Activated CD8-positive, alpha-beta memory T cell treated with anti-CD3 and anti-CD28 coated beads, Interleukin-2, amount 10 ng/mL, durations not matched to agents 7 days and 5 days (primary cell): ENCODE measurements at regions of chr10 and their contacts with region 1.

Region 1: DNA sequence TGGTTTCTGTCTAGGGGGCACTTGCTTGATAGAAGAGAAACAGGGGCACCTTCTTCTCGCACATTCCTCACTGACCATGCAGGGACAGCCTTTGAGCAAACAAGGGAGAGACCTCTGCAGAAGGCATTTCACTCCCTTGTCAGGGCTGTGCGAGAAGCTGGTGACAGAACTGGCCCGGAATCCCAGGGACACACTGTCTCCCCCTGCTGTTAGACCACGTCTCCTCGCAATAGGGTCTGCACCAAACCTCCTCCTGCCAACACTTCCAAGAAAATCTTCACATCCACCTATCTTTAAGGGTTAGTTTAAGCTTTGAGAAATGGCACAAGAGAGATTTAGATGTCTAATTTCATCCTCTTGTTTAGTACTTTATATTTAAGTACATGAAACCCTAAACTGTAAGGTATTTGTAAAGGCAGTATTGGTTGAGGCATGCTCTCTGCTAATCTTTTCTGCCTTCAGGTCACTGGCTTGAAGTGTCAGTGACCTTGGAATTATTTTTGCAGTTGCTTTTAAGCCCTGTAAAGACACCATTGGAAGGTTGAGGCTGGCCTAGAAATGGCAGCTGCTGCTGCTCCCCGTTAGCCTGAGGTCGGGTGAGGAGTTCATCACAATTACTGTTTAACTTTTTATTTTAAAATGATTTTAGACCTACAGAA is 37.0 kb downstream of the RBM20 start:
- DNase-seq: peak; percentile 54
- ATAC-seq: peak; percentile 69
- H3K4me3 Mint-ChIP-seq: no peak overlapping the region
- H3K27ac Mint-ChIP-seq: no peak overlapping the region
- H3K4me1 Mint-ChIP-seq: peaks cover 2% of the 10 kb centered on the region
- H3K27me3 Mint-ChIP-seq: peaks cover 45% of the 10 kb centered on the region

Region 2: DNA sequence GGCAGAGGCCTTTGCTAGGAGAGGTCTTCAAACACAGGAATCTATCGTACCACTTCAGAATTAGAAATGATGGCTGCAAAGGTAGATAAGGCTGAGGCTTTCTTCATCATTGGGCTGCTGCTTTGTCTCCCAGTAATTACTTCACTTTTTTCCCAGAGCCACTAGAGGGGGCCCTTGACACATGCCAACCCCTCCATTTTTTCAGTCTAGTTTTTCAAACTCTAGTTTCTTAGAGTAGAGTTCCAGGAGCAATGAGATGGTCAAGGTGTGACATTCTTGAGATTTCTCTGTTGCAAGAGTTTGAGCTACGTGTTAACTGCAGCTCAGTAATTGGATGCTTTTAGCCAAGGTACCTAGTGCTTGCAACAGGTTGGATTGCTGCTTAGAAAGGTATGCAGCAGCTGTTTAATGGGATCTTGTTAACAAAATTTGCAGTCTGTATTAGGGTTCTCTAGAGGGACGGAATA is 70.8 kb before region 1 on chr10:
- CTCF ChIA-PET with region 1: interaction called, 13 read pairs
- DNase-seq: peak; percentile 66
- ATAC-seq: peak; percentile 54
- H3K4me3 Mint-ChIP-seq: no peak overlapping the region
- H3K27ac Mint-ChIP-seq: no peak overlapping the region
- H3K4me1 Mint-ChIP-seq: peaks cover 43% of the 10 kb centered on the region
- H3K27me3 Mint-ChIP-seq: no peaks in the 10 kb centered on the region

Region 3: GRCh38 chr10:110811791-110812574 is 130.8 kb after region 1 on chr10:
- CTCF ChIA-PET with region 1: no interaction called
- DNase-seq: no peak
- ATAC-seq: no peak
- H3K4me3 Mint-ChIP-seq: no peak overlapping the region
- H3K27ac Mint-ChIP-seq: no peak overlapping the region
- H3K4me1 Mint-ChIP-seq: no peaks in the 10 kb centered on the region
- H3K27me3 Mint-ChIP-seq: no peaks in the 10 kb centered on the region